ENCODE measurements at regions of chr10 and their contacts with region 1.

Region 1: GRCh38 chr10:123139521-123140163 is 3.9 kb downstream of the HMX3 start:
- DNase-seq: peak; percentile 23
- CTCF ChIP-seq: no peak

Region 2: GRCh38 chr10:123154092-123154921 is 14.7 kb after region 1 on chr10 and contains the start of gene BUB3:
- CTCF ChIA-PET with region 1: interaction called, 49 read pairs
- POLR2A ChIA-PET with region 1: interaction called, 4 read pairs
- DNase-seq: peak; percentile 97
- CTCF ChIP-seq: no peak

Region 3: DNA sequence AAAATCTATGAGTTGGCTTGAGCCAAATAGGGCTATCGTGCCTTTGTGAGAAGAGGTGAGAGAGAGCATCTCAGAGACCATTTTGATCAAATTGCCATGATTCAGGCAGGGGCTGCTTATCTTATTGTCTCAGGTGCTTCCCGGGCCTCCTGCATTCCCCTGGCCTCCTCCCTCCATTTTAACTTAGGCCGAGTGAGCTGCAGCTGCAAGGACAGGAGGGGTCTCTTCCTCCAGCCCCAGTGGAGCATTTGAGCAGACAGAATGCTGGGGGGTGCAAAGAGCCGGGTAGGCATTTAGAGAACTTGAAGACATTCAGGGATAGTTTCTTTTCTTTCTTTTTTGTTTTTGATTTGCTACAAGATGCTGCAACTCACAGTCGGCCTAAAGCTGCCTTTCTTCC is 73.5 kb after region 1 on chr10:
- CTCF ChIA-PET with region 1: no interaction called
- POLR2A ChIA-PET with region 1: no interaction called
- DNase-seq: no peak
- CTCF ChIP-seq: no peak

Region 4: GRCh38 chr10:123380497-123381085 is 240.9 kb after region 1 on chr10:
- CTCF ChIA-PET with region 1: interaction called, 10 read pairs
- POLR2A ChIA-PET with region 1: no interaction called
- DNase-seq: no peak
- CTCF ChIP-seq: peak; percentile 18

Region 5: DNA sequence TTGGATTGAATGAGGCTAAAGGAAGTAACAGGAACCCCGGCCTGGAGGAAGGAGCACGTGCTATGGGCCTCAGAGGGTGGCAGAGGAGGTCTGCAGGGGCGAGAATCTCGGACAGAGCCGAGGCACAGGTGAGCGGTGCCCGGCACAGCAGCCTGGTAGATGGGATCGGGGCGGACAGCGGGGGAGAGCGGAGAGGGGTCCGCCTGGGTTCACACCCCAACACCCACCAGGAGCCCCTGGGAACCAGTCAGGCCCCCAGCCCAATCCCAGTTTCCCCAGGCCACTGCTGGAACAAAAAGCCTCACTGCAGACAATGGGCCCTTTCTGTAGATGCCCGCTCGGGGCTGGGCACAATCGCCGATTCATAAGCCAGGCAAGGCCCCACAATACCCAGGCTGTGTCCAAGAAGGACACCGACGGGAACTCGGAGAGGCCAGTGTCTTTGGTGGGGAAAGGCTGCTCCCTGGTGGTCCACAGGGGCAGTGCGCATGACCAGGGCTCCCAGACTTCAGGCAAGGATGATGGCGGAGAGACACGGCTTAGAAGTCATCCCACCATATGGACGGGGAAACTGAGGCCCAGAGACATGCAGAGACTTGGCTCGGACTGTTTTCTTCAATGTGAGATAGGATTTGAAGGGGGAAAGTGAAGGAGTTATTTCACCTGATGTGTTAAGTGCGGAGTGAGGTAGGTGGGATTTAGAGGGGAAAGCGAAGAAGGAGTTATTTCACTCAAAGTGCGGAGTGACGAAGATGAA is 419.6 kb after region 1 on chr10:
- CTCF ChIA-PET with region 1: interaction called, 22 read pairs
- POLR2A ChIA-PET with region 1: no interaction called
- DNase-seq: peak; percentile 88
- CTCF ChIP-seq: peak; percentile 100